Mammary epithelial cell (primary cell): ENCODE measurements at regions of chr9 and their contacts with region 1.

Region 1: GRCh38 chr9:89763346-89763985 is 158.7 kb downstream of the GADD45G start:
- DNase-seq: no peak
- H3K4me3 ChIP-seq: no peak overlapping the region
- H3K27ac ChIP-seq: no peak overlapping the region
- H3K4me1 ChIP-seq: no peaks in the 10 kb centered on the region
- H3K27me3 ChIP-seq: no peaks in the 10 kb centered on the region
- CTCF ChIP-seq: no peak

Region 2: GRCh38 chr9:89710697-89711096 is 52.8 kb before region 1 on chr9:
- CTCF ChIA-PET with region 1: no interaction called
- dilution Hi-C with region 1: loop called (anchors 5 kb)
- in situ Hi-C with region 1: no loop called
- intact Hi-C with region 1: no loop called
- DNase-seq: no peak
- H3K4me3 ChIP-seq: no peak overlapping the region
- H3K27ac ChIP-seq: no peak overlapping the region
- H3K4me1 ChIP-seq: no peaks in the 10 kb centered on the region
- H3K27me3 ChIP-seq: no peaks in the 10 kb centered on the region
- CTCF ChIP-seq: no peak

Region 3: DNA sequence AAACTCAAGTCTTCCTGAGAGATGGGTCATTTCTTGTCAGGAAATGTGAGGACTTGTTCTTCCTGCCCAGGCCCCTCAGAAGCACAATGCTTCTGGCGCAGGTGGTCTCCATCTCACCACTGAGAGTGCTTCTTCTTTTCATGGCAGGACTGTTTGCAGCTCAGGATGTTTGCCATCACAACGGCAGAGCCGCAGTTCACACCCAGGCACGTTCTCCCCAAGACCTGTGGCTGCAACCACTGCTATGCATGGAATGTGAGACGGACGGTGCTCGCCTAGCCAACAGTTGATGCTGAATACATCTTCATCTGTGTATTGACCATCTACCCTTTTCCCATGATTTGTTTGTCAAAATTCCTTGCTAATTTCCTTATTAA is 57.6 kb after region 1 on chr9:
- CTCF ChIA-PET with region 1: no interaction called
- dilution Hi-C with region 1: no loop called
- in situ Hi-C with region 1: no loop called
- intact Hi-C with region 1: no loop called
- DNase-seq: peak; percentile 31
- H3K4me3 ChIP-seq: no peak overlapping the region
- H3K27ac ChIP-seq: no peak overlapping the region
- H3K4me1 ChIP-seq: peaks cover 4% of the 10 kb centered on the region
- H3K27me3 ChIP-seq: no peaks in the 10 kb centered on the region
- CTCF ChIP-seq: no peak

Region 4: GRCh38 chr9:89863837-89864236 is 100.4 kb after region 1 on chr9:
- CTCF ChIA-PET with region 1: no interaction called
- dilution Hi-C with region 1: no loop called
- in situ Hi-C with region 1: no loop called
- intact Hi-C with region 1: no loop called
- DNase-seq: no peak
- H3K4me3 ChIP-seq: no peak overlapping the region
- H3K27ac ChIP-seq: no peak overlapping the region
- H3K4me1 ChIP-seq: no peaks in the 10 kb centered on the region
- H3K27me3 ChIP-seq: peaks cover 3% of the 10 kb centered on the region
- CTCF ChIP-seq: no peak